OCI-LY7 (cell line): ENCODE measurements at regions of chr14 and their contacts with region 1.

Region 1: GRCh38 chr14:65412032-65412846 is at the start of gene FUT8:
- DNase-seq: peak; percentile 95
- H3K4me3 ChIP-seq: peak within 1 kb of the TSS; percentile 91
- H3K27ac ChIP-seq: peak within 1 kb of the TSS; percentile 85
- H3K4me1 ChIP-seq: peaks cover 31% of the 10 kb centered on the region
- CTCF ChIP-seq: peak; percentile 75
- total RNA-seq, gene FUT8: 90.3 and 128 TPM in 2 replicates

Region 2: DNA sequence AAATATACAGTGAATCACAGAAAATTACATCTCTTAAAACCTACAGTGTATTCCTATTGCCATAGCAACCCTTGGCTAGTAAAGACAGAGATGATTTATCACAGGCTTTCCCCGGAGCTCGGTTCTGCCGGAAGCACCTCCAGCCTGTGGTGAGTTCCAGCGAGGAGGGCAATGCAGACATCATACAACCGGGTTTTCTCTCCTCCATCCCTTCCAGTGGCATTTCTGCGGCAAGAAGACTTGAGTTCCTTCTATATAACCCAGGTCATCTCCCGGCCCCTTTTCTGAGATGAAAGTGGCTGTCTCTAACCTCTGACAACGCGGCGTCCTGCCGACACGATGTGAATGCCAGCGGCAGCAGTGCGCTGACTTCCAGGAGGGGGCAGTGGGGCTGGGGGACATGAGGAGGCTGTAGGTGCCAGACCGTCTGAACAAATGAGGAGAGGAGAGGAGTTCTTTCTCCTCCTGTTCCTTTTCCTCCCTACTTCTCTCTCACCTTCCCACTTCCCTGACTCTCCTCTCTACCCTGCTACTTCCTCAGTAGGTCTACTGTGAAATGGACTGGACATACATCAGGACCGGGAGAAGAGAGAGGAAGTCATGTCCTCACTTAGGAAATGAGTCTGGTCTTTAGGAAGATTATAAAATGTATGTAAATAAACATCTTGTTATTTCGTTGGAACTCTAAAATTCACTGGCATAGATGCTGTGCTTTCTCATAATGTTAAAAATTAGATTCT is 241.3 kb before region 1 on chr14:
- CTCF ChIA-PET with region 1: no interaction called
- POLR2A ChIA-PET with region 1: interaction called, 13 read pairs
- intact Hi-C with region 1: no loop called
- DNase-seq: peak; percentile 27
- H3K4me3 ChIP-seq: peak overlapping the region; percentile 41
- H3K27ac ChIP-seq: no peak overlapping the region
- H3K4me1 ChIP-seq: peaks cover 46% of the 10 kb centered on the region
- CTCF ChIP-seq: peak; percentile 66

Region 3: DNA sequence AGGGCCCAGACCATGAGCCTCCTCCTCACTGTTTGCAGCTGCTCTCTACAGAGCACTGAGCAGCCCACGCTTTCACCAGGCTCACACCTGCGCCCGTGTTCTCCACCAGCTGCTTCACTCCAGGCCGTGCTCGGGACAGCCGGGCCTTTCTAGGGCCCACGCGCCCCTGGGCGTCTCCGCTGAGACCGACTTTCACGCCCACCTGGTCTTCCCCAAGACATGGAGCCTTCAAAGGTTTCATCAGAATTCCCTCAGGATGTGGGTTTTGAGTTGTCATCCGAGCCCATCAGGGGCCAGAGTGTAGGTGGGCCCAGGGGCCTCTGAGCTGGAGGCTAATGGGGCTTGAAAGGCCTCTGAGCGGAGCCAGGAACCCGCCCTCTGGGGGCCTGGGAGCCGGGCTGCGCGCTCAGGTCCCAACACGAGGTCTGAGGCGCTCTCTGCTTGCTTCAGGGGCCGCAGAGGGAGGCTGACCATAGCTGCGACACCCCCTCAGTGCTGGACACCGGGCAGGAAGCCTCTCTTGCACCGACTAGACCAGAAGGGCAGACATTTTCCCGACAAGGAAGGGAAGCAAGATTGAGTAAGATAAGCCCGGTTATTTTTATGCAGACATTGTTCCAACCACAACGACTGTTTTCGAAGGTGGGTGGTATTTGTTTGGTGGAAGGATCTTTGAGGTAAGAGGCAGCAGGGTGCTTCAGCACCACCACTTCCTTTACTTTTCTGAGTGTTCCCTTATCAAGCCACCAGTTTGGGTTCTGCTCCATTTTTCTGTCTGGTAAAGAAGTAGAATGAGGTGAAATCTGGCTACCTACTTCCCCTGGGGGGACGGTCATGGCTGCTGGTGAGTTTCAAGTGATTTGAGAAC is 124.7 kb before region 1 on chr14:
- CTCF ChIA-PET with region 1: interaction called, 14 read pairs
- POLR2A ChIA-PET with region 1: interaction called, 39 read pairs
- intact Hi-C with region 1: loop called (anchors 1 kb)
- DNase-seq: peak; percentile 91
- H3K4me3 ChIP-seq: peak overlapping the region; percentile 45
- H3K27ac ChIP-seq: peak overlapping the region; percentile 90
- H3K4me1 ChIP-seq: peaks cover 93% of the 10 kb centered on the region
- CTCF ChIP-seq: 0 out of 2 replicates have a peak, but pooled peaks have one; percentile 27

Region 4: DNA sequence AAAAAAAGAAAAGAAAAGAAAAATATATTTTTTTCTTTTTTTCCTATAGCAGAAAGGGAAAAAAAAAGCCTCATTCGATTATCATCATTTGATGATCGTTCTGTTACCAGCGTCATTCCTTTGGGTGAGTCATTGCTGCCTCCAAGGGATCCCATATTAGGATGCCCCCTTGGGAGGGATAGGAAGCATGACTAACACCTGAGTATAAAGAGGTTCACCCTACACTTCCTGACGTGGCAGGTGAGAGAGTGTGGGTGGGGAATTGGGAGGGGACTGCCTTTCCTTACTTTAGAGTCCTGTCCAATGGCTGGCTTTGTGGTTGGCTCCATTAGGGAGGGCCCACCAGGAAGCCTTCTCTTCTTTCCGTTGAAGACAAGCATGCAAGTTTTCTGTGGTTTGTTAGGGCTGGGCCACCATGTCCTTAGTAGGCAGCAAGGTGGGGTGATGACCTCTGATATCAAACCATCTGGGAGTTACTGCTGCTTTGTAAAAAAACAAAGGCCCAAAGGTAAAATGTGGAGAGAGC is 55.8 kb before region 1 on chr14:
- CTCF ChIA-PET with region 1: interaction called, 10 read pairs
- POLR2A ChIA-PET with region 1: interaction called, 31 read pairs
- intact Hi-C with region 1: loop called (anchors 2 kb)
- DNase-seq: peak; percentile 54
- H3K4me3 ChIP-seq: peak overlapping the region; percentile 38
- H3K27ac ChIP-seq: peak overlapping the region; percentile 97
- H3K4me1 ChIP-seq: peaks cover 98% of the 10 kb centered on the region
- CTCF ChIP-seq: no peak

Region 5: GRCh38 chr14:65745396-65746190 is 333.4 kb after region 1 on chr14:
- CTCF ChIA-PET with region 1: no interaction called
- POLR2A ChIA-PET with region 1: no interaction called
- intact Hi-C with region 1: loop called (anchors 5 kb)
- DNase-seq: no peak
- H3K4me3 ChIP-seq: no peak overlapping the region
- H3K27ac ChIP-seq: no peak overlapping the region
- H3K4me1 ChIP-seq: no peaks in the 10 kb centered on the region
- CTCF ChIP-seq: no peak

Region 6: DNA sequence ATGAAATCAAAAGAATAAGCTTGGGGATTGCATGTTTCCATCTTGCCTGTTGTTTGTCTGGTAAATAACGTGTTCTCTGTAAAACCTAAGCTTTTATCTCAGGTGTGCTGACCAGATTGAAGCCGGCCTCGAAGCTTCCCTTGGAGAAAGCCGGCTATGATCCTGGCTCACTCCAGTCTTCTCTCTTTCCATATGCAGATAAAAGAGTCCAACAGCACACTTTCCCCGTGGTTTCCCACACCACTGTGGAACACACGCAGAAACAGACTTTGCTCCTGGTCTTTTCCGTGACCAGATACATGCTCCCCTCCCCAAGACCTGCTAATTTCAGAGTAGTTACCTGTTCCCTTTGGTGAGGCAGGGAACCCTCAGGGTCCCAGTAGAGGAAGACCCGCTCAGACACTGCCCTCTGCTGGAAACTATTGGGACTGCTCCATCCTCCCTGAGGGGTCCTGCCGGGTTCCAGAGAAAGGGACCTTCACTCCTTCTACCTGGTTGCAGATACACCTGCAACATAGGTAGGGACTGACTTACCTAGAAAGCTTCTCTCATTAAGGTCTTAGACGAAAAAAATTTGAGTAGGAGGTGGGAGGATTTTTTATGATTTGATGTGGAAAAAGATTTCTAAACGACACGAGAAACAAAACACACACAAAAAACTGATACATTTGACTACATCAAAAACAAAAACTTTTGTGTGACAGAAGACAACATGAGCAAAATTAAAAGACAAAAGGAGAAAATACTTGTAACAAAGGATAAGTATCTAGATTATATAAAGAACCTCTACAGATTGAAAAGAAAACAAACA is 658.5 kb after region 1 on chr14:
- CTCF ChIA-PET with region 1: no interaction called
- POLR2A ChIA-PET with region 1: no interaction called
- intact Hi-C with region 1: loop called (anchors 5 kb)
- DNase-seq: peak; percentile 62
- H3K4me3 ChIP-seq: no peak overlapping the region
- H3K27ac ChIP-seq: no peak overlapping the region
- H3K4me1 ChIP-seq: no peaks in the 10 kb centered on the region
- CTCF ChIP-seq: peak; percentile 95